Gastrocnemius medialis (tissue), 4 donors: ENCODE measurements at regions of chr11 and their contacts with region 1.

Region 1: DNA sequence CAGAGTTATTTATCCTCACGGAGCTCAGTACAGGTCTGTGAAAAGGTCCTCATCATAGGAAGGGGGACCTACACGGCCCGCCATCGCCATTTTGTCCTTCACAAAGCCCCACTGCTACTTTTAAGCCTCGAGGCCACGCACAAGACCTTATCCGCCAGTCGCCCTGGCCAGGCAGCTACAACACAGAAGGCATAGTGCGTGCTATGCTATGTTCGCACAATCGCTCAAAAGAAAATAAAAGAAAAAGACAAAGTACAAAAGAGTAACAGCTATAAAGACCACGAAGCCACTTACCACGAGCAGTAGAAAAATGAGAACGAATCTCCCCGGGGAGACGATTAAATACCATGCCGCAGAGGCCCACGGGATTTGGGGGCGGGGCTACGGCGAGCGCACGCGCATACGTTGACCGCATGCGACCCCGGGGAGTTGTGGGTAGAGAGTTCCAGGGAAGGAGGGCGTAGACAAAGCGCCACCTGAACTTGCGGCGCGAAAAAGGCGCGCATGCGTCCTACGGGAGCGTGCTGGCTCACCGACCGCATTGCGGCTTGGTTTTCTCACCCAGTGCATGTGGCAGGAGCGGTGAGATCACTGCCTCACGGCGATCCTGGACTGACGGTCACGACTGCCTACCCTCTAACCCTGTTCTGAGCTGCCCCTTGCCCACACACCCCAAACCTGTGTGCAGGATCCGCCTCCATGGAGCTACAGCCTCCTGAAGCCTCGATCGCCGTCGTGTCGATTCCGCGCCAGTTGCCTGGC is 16.4 kb upstream of the WDR74 start:
- DNase-seq: peak; percentile 95 to 96
- ATAC-seq: peak; percentile 99
- H3K4me3 ChIP-seq: peak overlapping the region; percentile 70 to 90 (median 80)
- H3K27ac ChIP-seq: peak overlapping the region; percentile 84 to 88 (median 86)
- H3K4me1 ChIP-seq: peaks cover 20 to 21% of the 10 kb centered on the region in 2 donors
- H3K27me3 ChIP-seq: no peaks in the 10 kb centered on the region
- CTCF ChIP-seq: peak in 1 of 5 experiments; percentile 13
- POLR2A ChIP-seq: peak; percentile 93 to 96

Region 2: DNA sequence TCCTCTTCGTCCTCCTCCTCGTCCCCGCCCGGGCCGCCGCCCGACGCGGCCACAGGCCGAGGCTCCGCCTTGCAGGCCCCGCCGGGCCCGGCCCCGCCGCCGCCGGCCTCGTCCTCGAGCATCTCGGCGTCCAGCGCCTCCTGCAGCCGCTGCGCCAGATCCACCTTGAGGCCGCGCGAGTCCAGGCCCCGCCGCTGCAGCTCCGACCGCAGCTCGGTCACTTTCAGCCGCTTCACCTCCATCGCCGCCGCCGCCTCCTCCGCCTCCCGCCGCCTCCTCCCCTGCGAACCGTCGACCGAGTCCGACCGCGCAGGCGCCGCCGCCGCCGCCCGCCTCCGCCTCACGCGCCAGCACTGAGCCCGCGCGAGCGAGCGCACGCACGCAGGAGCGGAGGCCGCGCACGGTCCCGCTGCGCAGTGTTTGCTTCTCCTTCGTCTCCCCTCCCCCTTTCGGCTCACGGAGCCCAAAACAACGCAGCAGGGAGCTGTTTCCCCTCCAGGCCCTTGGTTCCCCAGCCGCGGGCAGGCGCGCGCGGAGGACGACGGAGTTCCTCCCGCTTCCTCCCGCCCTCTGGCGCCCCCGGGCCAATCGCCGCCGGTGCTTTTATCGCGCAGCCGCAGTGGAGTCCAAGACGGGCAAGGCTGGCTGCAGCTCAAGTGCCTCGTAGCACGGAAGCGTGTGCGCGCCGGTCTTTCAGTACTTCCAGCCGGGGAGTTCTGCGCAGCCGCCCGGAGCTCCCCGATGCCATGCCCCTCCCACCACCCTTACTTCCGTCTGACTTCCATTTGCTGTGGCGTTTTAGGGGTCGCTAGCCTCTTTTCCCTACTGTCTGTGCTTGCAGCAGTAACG is 128.6 kb before region 1 on chr11 and contains the start of gene HNRNPUL2:
- in situ Hi-C with region 1: no loop called
- intact Hi-C with region 1: loop called (anchors 5 kb)
- DNase-seq: peak; percentile 97 to 99
- ATAC-seq: peak; percentile 79 to 81
- H3K4me3 ChIP-seq: peak within 1 kb of the TSS; percentile 63 to 95 (median 80)
- H3K27ac ChIP-seq: peak within 1 kb of the TSS; percentile 87 to 94 (median 90)
- H3K4me1 ChIP-seq: peaks cover 44 to 47% of the 10 kb centered on the region in 2 donors
- H3K27me3 ChIP-seq: no peaks in the 10 kb centered on the region
- CTCF ChIP-seq: no peak
- POLR2A ChIP-seq: peak; percentile 93 to 97
- total RNA-seq, gene HNRNPUL2: 4.8 to 14.9 (median 11.8) TPM

Region 3: GRCh38 chr11:62771144-62772021 is 84.4 kb before region 1 on chr11 and contains the start of gene TAF6L:
- in situ Hi-C with region 1: no loop called
- intact Hi-C with region 1: loop called (anchors 5 kb)
- DNase-seq: peak; percentile 99
- ATAC-seq: peak; percentile 92 to 97
- H3K4me3 ChIP-seq: peak within 1 kb of the TSS; percentile 74 to 87 (median 76)
- H3K27ac ChIP-seq: peak within 1 kb of the TSS; percentile 89 to 99 (median 96)
- H3K4me1 ChIP-seq: peaks cover 18 to 23% of the 10 kb centered on the region in 2 donors
- H3K27me3 ChIP-seq: no peaks in the 10 kb centered on the region
- CTCF ChIP-seq: peak in 1 of 5 experiments; percentile 38
- POLR2A ChIP-seq: peak in 1 of 2 donors; percentile 45
- total RNA-seq, gene TAF6L: 13.5 to 43.2 (median 21.4) TPM

Region 4: GRCh38 chr11:62841361-62842184 is 14.2 kb before region 1 on chr11:
- in situ Hi-C with region 1: no loop called
- intact Hi-C with region 1: loop called (anchors 1 kb)
- DNase-seq: peak; percentile 85 to 91
- ATAC-seq: peak; percentile 73 to 76
- H3K4me3 ChIP-seq: peak overlapping the region; percentile 82 to 100 (median 96)
- H3K27ac ChIP-seq: peak overlapping the region; percentile 97 to 99 (median 98)
- H3K4me1 ChIP-seq: peaks cover 20% of the 10 kb centered on the region in 2 donors
- H3K27me3 ChIP-seq: no peaks in the 10 kb centered on the region
- CTCF ChIP-seq: peak in 1 of 5 experiments; percentile 5
- POLR2A ChIP-seq: peak; percentile 99 to 100

Region 5: GRCh38 chr11:63417174-63417852 is 561.6 kb after region 1 on chr11:
- in situ Hi-C with region 1: no loop called
- intact Hi-C with region 1: no loop called
- DNase-seq: no peak
- ATAC-seq: no peak
- H3K4me3 ChIP-seq: no peak overlapping the region
- H3K27ac ChIP-seq: no peak overlapping the region
- H3K4me1 ChIP-seq: no peaks in the 10 kb centered on the region
- H3K27me3 ChIP-seq: no peaks in the 10 kb centered on the region
- CTCF ChIP-seq: no peak
- POLR2A ChIP-seq: no peak